ENCODE measurements at regions of chrX and their contacts with region 1.

Region 1: GRCh38 chrX:102129473-102129872 is 4.0 kb downstream of the TCEAL2 start:
- DNase-seq: no peak
- H3K4me3 Mint-ChIP-seq: no peak overlapping the region
- H3K27ac Mint-ChIP-seq: no peak overlapping the region
- H3K4me1 Mint-ChIP-seq: peaks cover 4% of the 10 kb centered on the region
- H3K27me3 Mint-ChIP-seq: peaks cover 23% of the 10 kb centered on the region

Region 2: DNA sequence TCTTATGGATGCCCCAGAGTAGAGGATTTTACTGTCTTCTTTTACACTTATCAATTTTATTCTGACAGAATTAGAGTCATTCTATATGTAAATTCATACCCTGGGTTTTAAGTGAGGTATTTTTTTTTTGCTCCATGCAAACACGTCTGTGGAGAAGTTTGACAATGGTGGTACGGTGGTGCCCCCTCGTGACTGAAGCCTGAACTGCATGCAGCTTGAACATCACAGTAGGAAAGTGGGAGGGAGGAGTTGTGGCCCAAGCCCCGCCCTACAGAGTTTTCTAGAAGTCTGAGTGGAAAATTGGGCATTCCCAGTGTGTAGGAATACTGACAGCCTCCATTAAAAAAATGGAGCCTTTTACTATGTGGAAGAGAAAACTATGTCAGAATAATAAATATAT is 734.3 kb after region 1 on chrX:
- CTCF ChIA-PET with region 1: no interaction called
- POLR2A ChIA-PET with region 1: no interaction called
- intact Hi-C with region 1: loop called (anchors 10 kb)
- DNase-seq: peak; percentile 87
- H3K4me3 Mint-ChIP-seq: no peak overlapping the region
- H3K27ac Mint-ChIP-seq: no peak overlapping the region
- H3K4me1 Mint-ChIP-seq: no peaks in the 10 kb centered on the region
- H3K27me3 Mint-ChIP-seq: no peaks in the 10 kb centered on the region

Measured in activated CD4-positive, alpha-beta memory T cell treated with anti-CD3 and anti-CD28 coated beads for 36 hours (primary cell).